Caco-2 (cell line): ENCODE measurements at regions of chr14 and their contacts with region 1.

Region 1: DNA sequence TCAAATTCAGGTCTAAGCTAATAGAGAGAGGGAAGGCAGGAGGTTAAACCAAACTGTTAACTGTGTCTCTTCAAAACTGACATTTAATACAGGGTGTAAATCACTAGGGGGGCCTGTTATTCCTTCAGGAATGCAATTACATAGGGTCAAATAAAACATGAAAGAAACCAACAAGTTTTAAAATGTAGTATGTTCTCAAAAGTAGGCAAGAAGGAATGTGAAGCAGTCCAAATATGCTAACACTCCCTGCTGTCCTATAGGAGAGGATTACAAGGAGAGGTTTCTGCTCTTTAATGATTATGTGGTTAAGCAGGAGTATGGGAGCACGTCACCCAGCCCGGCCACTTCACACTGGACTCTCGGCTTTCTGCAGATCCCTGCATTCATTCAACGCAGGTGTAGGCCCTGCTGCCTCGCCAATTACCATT is 42.5 kb upstream of the BMP4 start:
- DNase-seq: peak; percentile 88 to 93
- H3K4me3 ChIP-seq: no peak overlapping the region
- H3K4me3 Mint-ChIP-seq: peak overlapping the region; percentile 61
- H3K27ac Mint-ChIP-seq: peak overlapping the region; percentile 96
- H3K4me1 ChIP-seq: peaks cover 58% of the 10 kb centered on the region
- H3K4me1 Mint-ChIP-seq: peaks cover 50% of the 10 kb centered on the region
- H3K27me3 ChIP-seq: no peaks in the 10 kb centered on the region
- H3K27me3 Mint-ChIP-seq: no peaks in the 10 kb centered on the region
- CTCF ChIP-seq: no peak

Region 2: GRCh38 chr14:53613404-53614253 is 385.4 kb before region 1 on chr14:
- CTCF ChIA-PET with region 1: no interaction called
- POLR2A ChIA-PET with region 1: interaction called, 3 read pairs
- intact Hi-C with region 1: loop called (anchors 5 kb)
- DNase-seq: peak; percentile 89 to 91
- H3K4me3 ChIP-seq: peak overlapping the region; percentile 41
- H3K4me3 Mint-ChIP-seq: peak overlapping the region; percentile 83
- H3K27ac Mint-ChIP-seq: peak overlapping the region; percentile 98
- H3K4me1 ChIP-seq: peaks cover 56% of the 10 kb centered on the region
- H3K4me1 Mint-ChIP-seq: peaks cover 17% of the 10 kb centered on the region
- H3K27me3 ChIP-seq: no peaks in the 10 kb centered on the region
- H3K27me3 Mint-ChIP-seq: no peaks in the 10 kb centered on the region
- CTCF ChIP-seq: peak in 1 of 2 experiments; percentile 32

Region 3: GRCh38 chr14:53888535-53889386 is 110.3 kb before region 1 on chr14:
- CTCF ChIA-PET with region 1: no interaction called
- POLR2A ChIA-PET with region 1: no interaction called
- intact Hi-C with region 1: loop called (anchors 2 kb)
- DNase-seq: peak in 1 of 2 experiments; percentile 46
- H3K4me3 ChIP-seq: peak overlapping the region; percentile 13; the same call in 1 of the 2 replicates
- H3K4me3 Mint-ChIP-seq: peak overlapping the region; percentile 59
- H3K27ac Mint-ChIP-seq: peak overlapping the region; percentile 45
- H3K4me1 ChIP-seq: peaks cover 42% of the 10 kb centered on the region
- H3K4me1 Mint-ChIP-seq: peaks cover 48% of the 10 kb centered on the region
- H3K27me3 ChIP-seq: no peaks in the 10 kb centered on the region
- H3K27me3 Mint-ChIP-seq: no peaks in the 10 kb centered on the region
- CTCF ChIP-seq: no peak

Region 4: GRCh38 chr14:53953002-53953827 is 45.9 kb before region 1 on chr14:
- CTCF ChIA-PET with region 1: interaction called, 36 read pairs
- POLR2A ChIA-PET with region 1: interaction called, 12 read pairs
- intact Hi-C with region 1: loop called (anchors 1 kb)
- DNase-seq: peak; percentile 80 to 89
- H3K4me3 ChIP-seq: peak overlapping the region; percentile 51
- H3K4me3 Mint-ChIP-seq: peak overlapping the region; percentile 100
- H3K27ac Mint-ChIP-seq: peak overlapping the region; percentile 80
- H3K4me1 ChIP-seq: peaks cover 14% of the 10 kb centered on the region
- H3K4me1 Mint-ChIP-seq: peaks cover 10% of the 10 kb centered on the region
- H3K27me3 ChIP-seq: no peaks in the 10 kb centered on the region
- H3K27me3 Mint-ChIP-seq: no peaks in the 10 kb centered on the region
- CTCF ChIP-seq: no peak

Region 5: GRCh38 chr14:54010981-54011380 is 11.9 kb after region 1 on chr14:
- CTCF ChIA-PET with region 1: interaction called, 12 read pairs
- POLR2A ChIA-PET with region 1: no interaction called
- intact Hi-C with region 1: no loop called
- DNase-seq: no peak
- H3K4me3 ChIP-seq: no peak overlapping the region
- H3K4me3 Mint-ChIP-seq: no peak overlapping the region
- H3K27ac Mint-ChIP-seq: no peak overlapping the region
- H3K4me1 ChIP-seq: peaks cover 4% of the 10 kb centered on the region; the same call in 1 of the 2 replicates
- H3K4me1 Mint-ChIP-seq: peaks cover 13% of the 10 kb centered on the region
- H3K27me3 ChIP-seq: no peaks in the 10 kb centered on the region
- H3K27me3 Mint-ChIP-seq: no peaks in the 10 kb centered on the region
- CTCF ChIP-seq: no peak

Region 6: GRCh38 chr14:54102051-54102456 is 103.0 kb after region 1 on chr14:
- CTCF ChIA-PET with region 1: no interaction called
- POLR2A ChIA-PET with region 1: no interaction called
- intact Hi-C with region 1: loop called (anchors 2 kb)
- DNase-seq: peak; percentile 39 to 42
- H3K4me3 ChIP-seq: no peak overlapping the region
- H3K4me3 Mint-ChIP-seq: no peak overlapping the region
- H3K27ac Mint-ChIP-seq: peak overlapping the region; percentile 53
- H3K4me1 ChIP-seq: peaks cover 14% of the 10 kb centered on the region
- H3K4me1 Mint-ChIP-seq: peaks cover 20% of the 10 kb centered on the region
- H3K27me3 ChIP-seq: no peaks in the 10 kb centered on the region
- H3K27me3 Mint-ChIP-seq: no peaks in the 10 kb centered on the region
- CTCF ChIP-seq: no peak